A673 (cell line): ENCODE measurements at regions of chr7 and their contacts with region 1.

Region 1: DNA sequence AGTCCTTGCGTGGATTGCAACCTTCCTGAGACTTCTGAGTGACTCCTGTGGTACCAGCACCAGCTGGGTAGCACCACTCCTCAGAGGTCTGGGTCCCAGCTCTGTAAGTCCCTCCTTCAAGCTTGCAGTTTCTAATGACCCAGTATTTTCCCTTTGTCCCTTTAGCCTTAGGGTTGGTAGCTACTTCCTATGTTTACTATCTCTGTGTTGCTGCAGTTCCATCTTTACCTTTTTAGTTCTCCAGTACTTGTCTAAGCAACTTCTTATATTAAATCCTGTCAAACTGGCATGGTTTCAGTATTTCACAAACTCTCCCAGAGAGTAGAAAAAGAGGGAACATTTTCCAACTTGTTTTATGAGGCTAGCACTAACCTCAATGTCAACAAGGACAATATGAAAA is 12.9 kb downstream of the LRRD1 start:
- DNase-seq: no peak
- H3K4me3 ChIP-seq: no peak overlapping the region
- H3K27ac ChIP-seq: no peak overlapping the region
- H3K4me1 ChIP-seq: no peaks in the 10 kb centered on the region
- H3K27me3 ChIP-seq: peaks cover 12% of the 10 kb centered on the region
- CTCF ChIP-seq: no peak

Region 2: DNA sequence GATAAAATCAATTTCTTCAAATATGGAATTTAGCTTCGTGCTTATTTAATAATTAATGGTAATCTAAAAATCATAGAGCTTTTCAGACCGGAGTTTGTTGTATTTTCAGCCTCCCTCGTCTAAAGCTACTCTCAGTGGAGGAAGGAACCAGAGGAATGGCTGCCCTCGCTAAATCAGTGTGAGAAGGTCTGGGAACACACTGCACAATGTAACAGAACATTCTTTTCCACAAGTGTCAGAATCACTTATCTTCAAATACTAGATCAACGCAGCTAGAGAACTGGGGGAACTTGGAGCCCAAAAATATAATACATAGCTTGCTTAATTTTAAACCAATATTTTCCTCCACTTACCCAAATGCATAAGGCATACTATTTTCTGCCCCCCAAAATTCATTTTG is 434.1 kb before region 1 on chr7:
- CTCF ChIA-PET with region 1: no interaction called
- POLR2A ChIA-PET with region 1: no interaction called
- intact Hi-C with region 1: no loop called
- DNase-seq: no peak
- H3K4me3 ChIP-seq: no peak overlapping the region
- H3K27ac ChIP-seq: no peak overlapping the region
- H3K4me1 ChIP-seq: no peaks in the 10 kb centered on the region
- H3K27me3 ChIP-seq: no peaks in the 10 kb centered on the region
- CTCF ChIP-seq: no peak

Region 3: DNA sequence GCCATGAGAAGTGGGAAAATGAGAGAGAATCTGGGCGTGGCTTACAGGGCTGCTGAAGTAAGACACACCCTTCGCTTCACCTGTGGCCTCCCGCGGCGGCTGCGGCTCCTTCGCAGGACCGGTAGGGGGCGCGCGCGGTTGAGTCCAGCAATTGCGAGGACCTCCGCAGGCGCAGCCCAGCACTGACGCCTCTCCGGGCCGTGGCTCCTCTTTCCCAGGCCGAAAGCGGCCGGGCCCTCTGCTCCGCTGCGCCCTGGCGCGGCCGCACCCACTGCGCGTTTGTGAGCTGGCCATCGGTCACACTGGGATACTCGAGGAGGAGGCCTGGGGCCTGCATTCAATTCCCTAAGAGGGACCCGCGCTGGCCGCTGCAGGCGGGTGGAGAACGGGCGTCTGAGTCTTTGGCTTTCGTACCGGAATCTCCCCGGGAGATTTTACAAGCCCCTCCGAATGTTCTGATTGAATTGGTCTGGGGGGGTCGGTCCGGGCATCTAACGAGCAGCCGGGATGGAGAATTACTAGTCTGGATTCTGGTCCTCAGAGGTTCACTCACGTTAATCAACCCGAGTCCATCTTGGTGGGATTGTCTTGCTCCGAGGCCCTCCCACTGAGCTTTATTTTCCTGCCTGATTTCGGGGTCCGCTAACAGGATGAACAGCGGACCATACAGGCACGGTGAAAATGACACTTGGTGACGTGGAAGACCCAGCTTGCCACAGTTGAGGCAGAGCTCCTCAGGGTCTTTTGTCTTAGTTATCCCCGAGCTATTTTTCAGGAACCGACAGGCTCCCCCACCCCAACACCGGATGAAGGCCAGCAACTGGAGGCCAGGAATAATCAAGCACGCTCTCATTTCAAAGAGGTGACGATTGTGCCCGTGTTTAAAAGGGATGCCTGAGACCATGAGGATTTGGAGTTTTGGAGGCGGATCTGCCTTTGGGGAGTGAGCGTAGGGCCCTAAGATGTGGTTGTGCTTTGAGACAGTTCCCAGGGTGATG is 13.1 kb after region 1 on chr7 and contains the start of gene LRRD1:
- CTCF ChIA-PET with region 1: no interaction called
- POLR2A ChIA-PET with region 1: interaction called, 10 read pairs
- intact Hi-C with region 1: no loop called
- DNase-seq: peak; percentile 82
- H3K4me3 ChIP-seq: peak within 1 kb of the TSS; percentile 50
- H3K27ac ChIP-seq: no peak within 1 kb of the TSS
- H3K4me1 ChIP-seq: no peaks in the 10 kb centered on the region
- H3K27me3 ChIP-seq: no peaks in the 10 kb centered on the region
- CTCF ChIP-seq: peak; percentile 98
- total RNA-seq, gene LRRD1: 0.11 TPM in 1 of 2 replicates, not detected in the other